Endothelial cell of umbilical vein (primary cell): ENCODE measurements at regions of chr12 and their contacts with region 1.

Region 1: DNA sequence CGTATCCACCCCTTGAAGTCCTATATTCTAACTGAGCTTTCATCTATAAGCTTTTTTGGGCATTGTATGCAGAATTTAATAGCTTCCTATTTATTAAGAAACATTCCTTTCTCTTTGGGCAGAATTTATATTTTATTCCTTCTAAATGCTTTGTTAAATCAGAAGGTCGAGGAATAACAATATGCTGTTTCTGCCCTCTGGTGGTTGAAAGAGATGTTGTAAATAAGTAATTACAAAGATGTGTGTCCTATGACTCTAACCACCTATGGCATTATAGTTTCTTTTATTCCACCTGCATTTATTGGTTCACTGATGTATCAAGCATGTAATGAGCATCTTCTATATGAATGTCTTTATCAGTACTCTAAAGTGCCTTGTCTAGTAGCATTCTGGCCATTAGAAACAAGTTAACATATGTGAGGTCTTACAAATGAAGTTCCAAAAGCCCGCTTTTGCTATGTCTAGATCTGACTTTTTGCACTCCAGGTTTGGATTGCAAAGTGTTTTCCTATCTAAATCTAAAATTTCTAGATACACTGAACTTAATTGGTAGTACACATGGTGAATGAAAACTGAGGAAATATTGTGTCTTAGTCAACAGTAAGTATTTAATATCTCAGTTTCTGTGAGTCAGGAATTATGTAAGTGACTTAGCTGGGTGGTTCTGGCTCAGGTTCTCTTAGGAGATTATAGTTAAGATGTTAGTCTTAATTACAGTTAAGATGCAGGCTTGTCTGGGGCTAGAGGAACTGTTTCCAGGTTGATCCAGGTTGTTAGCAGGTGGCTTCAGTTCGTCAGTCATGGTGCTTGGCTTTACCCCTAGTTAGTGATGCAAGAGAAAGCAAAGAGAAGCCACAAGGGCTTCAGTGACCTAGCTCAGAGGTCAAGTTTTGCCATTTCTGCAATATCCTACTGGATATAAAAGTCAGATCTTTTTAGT is 57.5 kb downstream of the PLEKHA5 start:
- DNase-seq: peak; percentile 71
- H3K4me3 ChIP-seq: no peak overlapping the region
- H3K27ac ChIP-seq: no peak overlapping the region
- H3K4me1 ChIP-seq: peaks cover 9% of the 10 kb centered on the region
- H3K27me3 ChIP-seq: no peaks in the 10 kb centered on the region
- CTCF ChIP-seq: peak; percentile 18 to 32
- POLR2A ChIP-seq: no peak

Region 2: GRCh38 chr12:18250313-18250916 is 936.6 kb before region 1 on chr12:
- CTCF ChIA-PET with region 1: interaction called, 30 read pairs
- POLR2A ChIA-PET with region 1: no interaction called
- dilution Hi-C with region 1: no loop called
- intact Hi-C with region 1: loop called (anchors 2 kb)
- DNase-seq: peak; percentile 52
- H3K4me3 ChIP-seq: no peak overlapping the region
- H3K27ac ChIP-seq: no peak overlapping the region
- H3K4me1 ChIP-seq: no peaks in the 10 kb centered on the region
- H3K27me3 ChIP-seq: no peaks in the 10 kb centered on the region
- CTCF ChIP-seq: peak; percentile 47 to 53
- POLR2A ChIP-seq: no peak

Region 3: DNA sequence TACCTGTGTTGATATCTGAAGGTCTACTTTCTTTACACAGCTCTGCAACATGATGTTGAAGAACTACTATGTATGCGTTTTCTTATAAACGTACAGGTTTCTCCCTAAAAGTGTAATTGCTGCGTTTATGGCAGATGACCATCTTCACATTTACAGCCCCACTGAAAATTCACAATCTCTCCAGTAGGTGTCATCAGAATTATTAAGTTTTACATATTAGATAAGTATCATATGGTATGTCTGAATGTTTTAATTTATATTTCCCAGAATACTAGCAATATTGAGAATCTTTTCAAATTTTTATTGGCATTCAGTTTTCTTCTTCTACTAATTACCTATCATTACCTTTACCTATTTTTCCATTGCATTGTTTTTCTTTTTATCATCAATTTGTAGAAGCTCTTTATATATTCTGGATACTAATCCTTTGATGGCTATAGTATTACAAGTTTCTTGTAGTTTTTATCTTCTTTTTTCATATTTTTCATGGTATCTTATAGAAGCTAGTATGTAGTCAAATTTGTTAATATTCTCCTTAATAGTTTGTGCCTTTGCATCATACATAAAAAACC is 325.6 kb before region 1 on chr12:
- CTCF ChIA-PET with region 1: interaction called, 69 read pairs
- POLR2A ChIA-PET with region 1: no interaction called
- dilution Hi-C with region 1: no loop called
- intact Hi-C with region 1: loop called (anchors 1 kb)
- DNase-seq: peak; percentile 60
- H3K4me3 ChIP-seq: no peak overlapping the region
- H3K27ac ChIP-seq: no peak overlapping the region
- H3K4me1 ChIP-seq: no peaks in the 10 kb centered on the region
- H3K27me3 ChIP-seq: peaks cover 2 to 3% of the 10 kb centered on the region in 2 experiments
- CTCF ChIP-seq: peak; percentile 19 to 35
- POLR2A ChIP-seq: no peak

Region 4: DNA sequence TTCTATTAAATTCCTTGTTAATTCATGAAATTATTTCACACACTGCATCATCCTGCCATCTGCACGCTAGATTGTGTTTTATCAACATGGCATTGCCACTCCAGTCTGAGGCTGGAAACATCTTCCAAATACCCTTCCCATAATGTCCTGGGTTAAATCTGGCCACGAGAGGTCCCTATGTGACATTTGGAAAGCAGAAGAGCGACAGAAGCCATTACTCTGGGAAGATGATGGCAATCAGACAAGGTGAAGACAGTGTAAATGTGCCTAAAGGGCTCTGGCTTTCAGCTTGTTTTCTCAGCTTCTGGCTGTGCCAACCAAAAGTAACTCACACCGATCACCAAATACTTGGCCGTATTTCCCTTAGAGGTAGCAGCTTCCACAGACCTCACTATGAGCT is 304.3 kb before region 1 on chr12:
- CTCF ChIA-PET with region 1: no interaction called
- POLR2A ChIA-PET with region 1: no interaction called
- dilution Hi-C with region 1: no loop called
- intact Hi-C with region 1: no loop called
- DNase-seq: no peak
- H3K4me3 ChIP-seq: no peak overlapping the region
- H3K27ac ChIP-seq: no peak overlapping the region
- H3K4me1 ChIP-seq: no peaks in the 10 kb centered on the region
- H3K27me3 ChIP-seq: no peaks in the 10 kb centered on the region
- CTCF ChIP-seq: no peak
- POLR2A ChIP-seq: no peak

Region 5: GRCh38 chr12:19120795-19121194 is 66.2 kb before region 1 on chr12:
- CTCF ChIA-PET with region 1: no interaction called
- POLR2A ChIA-PET with region 1: no interaction called
- dilution Hi-C with region 1: no loop called
- intact Hi-C with region 1: no loop called
- DNase-seq: no peak
- H3K4me3 ChIP-seq: no peak overlapping the region
- H3K27ac ChIP-seq: no peak overlapping the region
- H3K4me1 ChIP-seq: peaks cover 3% of the 10 kb centered on the region
- H3K27me3 ChIP-seq: no peaks in the 10 kb centered on the region
- CTCF ChIP-seq: no peak
- POLR2A ChIP-seq: no peak

Region 6: GRCh38 chr12:19223018-19223417 is 36.0 kb after region 1 on chr12:
- CTCF ChIA-PET with region 1: interaction called, 11 read pairs
- POLR2A ChIA-PET with region 1: no interaction called
- dilution Hi-C with region 1: no loop called
- intact Hi-C with region 1: no loop called
- DNase-seq: peak; percentile 43
- H3K4me3 ChIP-seq: no peak overlapping the region
- H3K27ac ChIP-seq: no peak overlapping the region
- H3K4me1 ChIP-seq: no peaks in the 10 kb centered on the region
- H3K27me3 ChIP-seq: no peaks in the 10 kb centered on the region
- CTCF ChIP-seq: peak; percentile 6 to 9
- POLR2A ChIP-seq: no peak

Region 7: DNA sequence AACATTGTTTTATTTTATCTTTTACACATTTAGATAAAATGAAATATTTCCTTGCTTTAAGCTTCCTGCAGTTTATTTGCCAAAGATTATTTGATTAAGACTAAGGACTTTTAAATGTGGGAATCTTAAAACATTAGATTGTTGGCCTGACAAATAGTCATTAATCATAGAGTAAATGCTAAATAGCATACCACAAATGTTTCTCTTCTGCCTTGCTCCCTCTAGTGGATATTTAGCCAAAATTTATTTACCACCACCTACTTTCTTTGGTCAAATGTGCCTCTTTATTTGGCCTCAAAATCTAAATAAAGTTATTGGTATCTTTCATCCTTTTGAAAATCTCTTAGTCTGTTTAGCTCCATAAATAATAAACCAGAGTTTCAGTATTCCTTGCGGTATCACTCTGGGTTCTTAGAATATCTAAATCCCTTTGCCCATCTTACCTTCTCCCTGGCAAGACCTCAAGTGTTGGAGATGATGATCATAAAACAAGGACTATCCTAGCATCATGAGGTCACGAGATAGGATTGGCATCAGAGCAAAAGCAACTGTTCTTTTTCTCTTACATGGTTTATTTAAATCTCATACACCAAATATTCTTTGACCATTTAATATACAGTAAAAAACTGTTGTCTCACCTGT is 101.7 kb after region 1 on chr12:
- CTCF ChIA-PET with region 1: interaction called, 5 read pairs
- POLR2A ChIA-PET with region 1: no interaction called
- dilution Hi-C with region 1: no loop called
- intact Hi-C with region 1: loop called (anchors 2 kb)
- DNase-seq: peak; percentile 58
- H3K4me3 ChIP-seq: no peak overlapping the region
- H3K27ac ChIP-seq: no peak overlapping the region
- H3K4me1 ChIP-seq: no peaks in the 10 kb centered on the region
- H3K27me3 ChIP-seq: no peaks in the 10 kb centered on the region
- CTCF ChIP-seq: peak; percentile 37 to 41
- POLR2A ChIP-seq: no peak

Region 8: GRCh38 chr12:19439059-19440018 is 252.3 kb after region 1 on chr12 and contains the start of gene AEBP2:
- CTCF ChIA-PET with region 1: no interaction called
- POLR2A ChIA-PET with region 1: no interaction called
- dilution Hi-C with region 1: no loop called
- intact Hi-C with region 1: no loop called
- DNase-seq: peak; percentile 94
- H3K4me3 ChIP-seq: peak within 1 kb of the TSS; percentile 90 to 97 (median 97)
- H3K27ac ChIP-seq: peak within 1 kb of the TSS; percentile 74
- H3K4me1 ChIP-seq: peaks cover 13% of the 10 kb centered on the region
- H3K27me3 ChIP-seq: peaks cover 0 to 6% of the 10 kb centered on the region in 2 experiments
- CTCF ChIP-seq: no peak
- POLR2A ChIP-seq: peak; percentile 12
- total RNA-seq, gene AEBP2: 42.2 and 45.1 TPM in 2 replicates